Dorsolateral prefrontal cortex (tissue), 120 donors: ENCODE measurements at regions of chr12 and their contacts with region 1.

Region 1: DNA sequence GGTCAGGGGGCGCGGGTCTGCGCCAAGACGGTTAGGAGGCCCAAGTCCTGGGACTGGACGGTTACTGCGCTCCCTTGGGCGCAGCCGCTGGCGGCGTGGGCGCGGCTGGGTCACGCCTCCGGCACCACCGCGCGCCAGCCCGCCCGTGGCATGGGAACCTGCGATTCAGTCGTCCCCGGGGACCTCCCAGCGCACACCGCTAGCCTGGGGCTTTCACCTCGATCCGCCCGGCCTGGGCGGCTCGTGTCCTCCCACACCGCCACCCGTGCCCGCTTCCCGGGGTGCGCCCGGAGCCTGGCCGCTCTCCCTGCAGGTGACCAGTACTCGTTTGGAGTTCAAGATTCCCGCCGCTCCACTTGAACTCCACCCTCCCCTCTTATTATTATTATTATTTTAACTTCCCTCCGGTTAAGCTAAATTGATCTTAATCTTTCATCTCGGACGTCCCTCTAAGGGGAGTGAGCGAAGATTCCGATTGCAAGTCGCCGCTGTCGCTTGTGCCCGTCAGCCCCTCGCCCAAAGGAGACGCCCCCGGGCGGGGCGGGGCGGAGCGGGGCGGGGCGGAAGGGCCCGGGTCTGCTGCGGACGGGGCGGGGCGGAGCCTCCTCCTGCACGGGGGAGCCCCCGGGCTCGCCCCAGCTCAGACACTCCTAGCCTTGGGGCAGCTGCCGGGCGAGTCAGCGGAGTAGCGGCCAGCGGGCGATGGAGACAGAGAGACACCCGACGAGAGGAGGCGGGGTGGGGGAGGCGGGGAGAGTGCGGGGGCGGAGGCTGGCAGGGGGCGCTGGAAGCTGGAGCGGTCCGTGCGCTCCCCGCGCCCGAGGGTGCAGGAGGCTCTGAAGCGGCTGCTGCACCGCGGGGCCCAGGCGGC is at the start of gene KCNMB4:
- DNase-seq: peak; percentile 55 to 91 (median 78)
- H3K4me3 ChIP-seq: peak within 1 kb of the TSS; percentile 53 to 94 (median 85)
- H3K27ac ChIP-seq: peak within 1 kb of the TSS; percentile 41 to 95 (median 86)
- H3K27me3 ChIP-seq: no peaks in the 10 kb centered on the region
- CTCF ChIP-seq: peak in 7 of 56 donors; percentile 4 to 27 (median 20)
- total RNA-seq, gene KCNMB4: 26.9 to 134 (median 53.1) TPM

Region 2: GRCh38 chr12:70049600-70050360 is 316.1 kb before region 1 on chr12:
- intact Hi-C with region 1: no loop called
- DNase-seq: no peak
- H3K4me3 ChIP-seq: no peak overlapping the region
- H3K27ac ChIP-seq: no peak overlapping the region
- H3K27me3 ChIP-seq: no peaks in the 10 kb centered on the region
- CTCF ChIP-seq: no peak

Region 3: GRCh38 chr12:70178038-70178437 is 187.8 kb before region 1 on chr12:
- intact Hi-C with region 1: loop called (anchors 10 kb)
- DNase-seq: peak in 1 of 10 donors; percentile 32
- H3K4me3 ChIP-seq: peak overlapping the region in 46 of 59 donors; percentile 0 to 56 (median 34)
- H3K27ac ChIP-seq: peak overlapping the region in 58 of 59 donors; percentile 27 to 94 (median 81)
- H3K27me3 ChIP-seq: no peaks in the 10 kb centered on the region
- CTCF ChIP-seq: peak in 16 of 56 donors; percentile 5 to 37 (median 14)

Region 4: GRCh38 chr12:70402600-70402999 is 36.7 kb after region 1 on chr12:
- intact Hi-C with region 1: loop called in 1 of 2 experiments (anchors 5 kb)
- DNase-seq: no peak
- H3K4me3 ChIP-seq: no peak overlapping the region
- H3K27ac ChIP-seq: peak overlapping the region in 11 of 59 donors; percentile 1 to 58 (median 25)
- H3K27me3 ChIP-seq: no peaks in the 10 kb centered on the region
- CTCF ChIP-seq: peak in 4 of 56 donors; percentile 15 to 38 (median 22)

Region 5: DNA sequence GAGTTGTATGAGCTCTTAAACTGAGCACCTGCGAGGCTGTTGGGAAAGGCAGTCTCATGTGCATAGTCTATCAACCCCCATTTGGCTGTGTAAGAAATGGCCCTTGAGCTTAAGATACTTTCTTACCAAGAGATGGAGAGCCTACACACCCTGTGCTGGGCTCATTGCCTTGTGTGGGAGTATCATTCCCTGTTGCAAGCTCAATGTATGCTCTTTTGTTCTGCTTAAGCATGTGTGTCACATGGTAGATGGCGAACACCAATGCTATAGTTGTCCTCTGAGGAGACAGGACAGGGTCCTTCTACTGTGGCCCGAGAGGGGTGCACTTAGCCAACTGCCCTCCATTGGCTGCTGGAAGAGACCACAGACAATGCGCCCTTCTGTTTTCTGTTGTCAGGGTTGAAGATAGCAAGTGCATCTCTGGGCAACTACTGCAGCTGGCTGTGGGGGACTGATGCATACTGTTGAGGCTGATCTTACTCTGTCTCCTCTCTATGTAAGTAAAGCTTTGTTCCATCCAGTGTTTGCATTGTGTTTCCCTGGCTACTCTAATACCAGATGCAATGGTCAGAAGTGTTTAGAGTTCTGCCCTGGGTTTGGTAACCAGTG is 191.8 kb after region 1 on chr12:
- intact Hi-C with region 1: loop called (anchors 5 kb)
- DNase-seq: peak; percentile 17 to 97 (median 86)
- H3K4me3 ChIP-seq: peak overlapping the region in 16 of 59 donors; percentile 1 to 45 (median 12)
- H3K27ac ChIP-seq: peak overlapping the region; percentile 69 to 99 (median 91)
- H3K27me3 ChIP-seq: no peaks in the 10 kb centered on the region
- CTCF ChIP-seq: peak in 13 of 56 donors; percentile 1 to 25 (median 11)

Region 6: GRCh38 chr12:70733385-70733784 is 367.5 kb after region 1 on chr12:
- intact Hi-C with region 1: no loop called
- DNase-seq: peak in 3 of 10 donors; percentile 39 to 57 (median 52)
- H3K4me3 ChIP-seq: no peak overlapping the region
- H3K27ac ChIP-seq: no peak overlapping the region
- H3K27me3 ChIP-seq: no peaks in the 10 kb centered on the region
- CTCF ChIP-seq: peak; percentile 42 to 91 (median 81)